ENCODE measurements at regions of chr10 and their contacts with region 1.

Region 1: DNA sequence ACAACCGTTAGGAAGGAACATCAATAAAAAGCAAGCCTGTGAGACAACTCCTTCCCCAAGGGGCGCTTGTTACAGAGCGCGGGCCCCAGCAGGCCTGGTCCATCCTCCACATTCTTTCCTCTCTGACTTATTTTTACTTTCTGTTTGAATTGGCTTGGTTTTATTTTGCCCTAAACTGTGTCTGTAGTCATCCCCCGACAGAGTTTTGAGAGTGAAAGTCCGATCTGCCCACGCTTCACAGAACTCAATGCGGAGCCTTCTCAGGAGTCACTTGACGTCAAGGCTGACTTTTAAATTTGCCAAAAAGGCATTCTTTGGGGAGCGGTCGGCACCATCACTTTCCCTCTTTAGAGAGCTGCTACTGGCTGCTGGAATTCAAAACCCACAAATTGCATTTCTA is 150.1 kb upstream of the KLF6 start:
- DNase-seq: peak in 13 of 14 experiments; percentile 12 to 75 (median 23)
- ATAC-seq: peak; percentile 83
- H3K4me3 ChIP-seq: peak overlapping the region; percentile 47
- H3K4me3 Mint-ChIP-seq: peak overlapping the region; percentile 83
- H3K27ac ChIP-seq: peak overlapping the region in 1 of 2 donors; percentile 75
- H3K27ac Mint-ChIP-seq: peak overlapping the region; percentile 86
- H3K4me1 ChIP-seq: peaks cover 8% of the 10 kb centered on the region
- H3K4me1 Mint-ChIP-seq: peaks cover 27% of the 10 kb centered on the region
- H3K27me3 ChIP-seq: no peaks in the 10 kb centered on the region
- H3K27me3 Mint-ChIP-seq: no peaks in the 10 kb centered on the region
- CTCF ChIP-seq: no peak

Region 2: DNA sequence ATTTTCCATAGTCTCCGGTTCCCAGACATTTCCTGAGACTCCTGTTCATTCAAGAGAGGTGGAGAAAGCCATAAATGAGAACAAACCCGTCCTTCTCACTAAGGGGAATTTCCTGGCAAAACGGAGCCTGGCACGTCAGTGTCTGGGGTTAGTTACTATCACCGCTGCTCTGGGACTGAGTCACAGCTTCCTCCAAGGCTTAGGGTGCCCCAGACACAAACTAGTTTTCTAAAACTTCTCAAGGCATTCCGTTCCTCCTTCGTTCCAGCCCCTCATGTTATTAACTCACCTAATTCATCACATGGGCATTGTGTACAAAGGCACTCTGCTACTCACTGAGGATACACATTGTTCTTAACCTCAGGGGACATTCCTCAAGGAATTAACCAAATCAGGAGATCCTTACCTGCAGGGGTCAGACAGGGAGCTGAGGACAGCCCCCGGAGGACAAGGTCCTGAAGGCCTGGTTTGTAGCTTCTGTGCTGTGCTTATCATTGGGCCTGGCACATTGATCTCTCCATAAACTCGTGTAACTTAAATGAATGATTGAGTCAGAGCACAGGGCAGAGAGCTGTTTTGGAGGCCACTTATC is 47.2 kb before region 1 on chr10:
- CTCF ChIA-PET with region 1: no interaction called
- POLR2A ChIA-PET with region 1: interaction called, 3 read pairs
- intact Hi-C with region 1: loop called in 1 of 2 experiments (anchors 5 kb)
- DNase-seq: peak in 13 of 14 experiments; percentile 34 to 94 (median 50)
- ATAC-seq: peak; percentile 77
- H3K4me3 ChIP-seq: peak overlapping the region; percentile 15
- H3K4me3 Mint-ChIP-seq: peak overlapping the region; percentile 55
- H3K27ac ChIP-seq: peak overlapping the region; percentile 24 to 82
- H3K27ac Mint-ChIP-seq: peak overlapping the region; percentile 92
- H3K4me1 ChIP-seq: peaks cover 40% of the 10 kb centered on the region
- H3K4me1 Mint-ChIP-seq: peaks cover 27% of the 10 kb centered on the region
- H3K27me3 ChIP-seq: no peaks in the 10 kb centered on the region
- H3K27me3 Mint-ChIP-seq: no peaks in the 10 kb centered on the region
- CTCF ChIP-seq: no peak